CD4-positive, alpha-beta memory T cell (primary cell): ENCODE measurements at regions of chr1 and their contacts with region 1.

Region 1: GRCh38 chr1:179809506-179810366 is 66.6 kb downstream of the FAM163A start:
- DNase-seq: peak; percentile 70 to 74 (median 71)
- H3K4me3 ChIP-seq: no peak overlapping the region
- H3K4me3 Mint-ChIP-seq: peak overlapping the region in 1 of 8 donors; percentile 46
- H3K27ac ChIP-seq: no peak overlapping the region
- H3K27ac Mint-ChIP-seq: peak overlapping the region in 6 of 7 donors; percentile 0 to 48 (median 5)
- H3K4me1 ChIP-seq: peaks cover 14% of the 10 kb centered on the region
- H3K4me1 Mint-ChIP-seq: peaks cover 8 to 12% (median 11%) of the 10 kb centered on the region in 4 donors
- H3K27me3 ChIP-seq: no peaks in the 10 kb centered on the region
- H3K27me3 Mint-ChIP-seq: peaks cover 0 to 3% of the 10 kb centered on the region in 2 donors

Region 2: GRCh38 chr1:179081687-179082332 is 727.9 kb before region 1 on chr1 and contains the start of gene TOR3A:
- CTCF ChIA-PET with region 1: interaction called, 26 read pairs
- POLR2A ChIA-PET with region 1: no interaction called
- intact Hi-C with region 1: no loop called
- DNase-seq: peak; percentile 72 to 80 (median 75)
- H3K4me3 ChIP-seq: peak within 1 kb of the TSS; percentile 57 to 74
- H3K4me3 Mint-ChIP-seq: peak within 1 kb of the TSS; percentile 93 to 98 (median 96)
- H3K27ac ChIP-seq: peak within 1 kb of the TSS; percentile 81
- H3K27ac Mint-ChIP-seq: peak within 1 kb of the TSS; percentile 97 to 98 (median 97)
- H3K4me1 ChIP-seq: peaks cover 23% of the 10 kb centered on the region
- H3K4me1 Mint-ChIP-seq: peaks cover 15 to 37% (median 26%) of the 10 kb centered on the region in 4 donors
- H3K27me3 ChIP-seq: no peaks in the 10 kb centered on the region
- H3K27me3 Mint-ChIP-seq: no peaks in the 10 kb centered on the region
- total RNA-seq, gene TOR3A: 25.4 to 27.3 TPM

Region 3: DNA sequence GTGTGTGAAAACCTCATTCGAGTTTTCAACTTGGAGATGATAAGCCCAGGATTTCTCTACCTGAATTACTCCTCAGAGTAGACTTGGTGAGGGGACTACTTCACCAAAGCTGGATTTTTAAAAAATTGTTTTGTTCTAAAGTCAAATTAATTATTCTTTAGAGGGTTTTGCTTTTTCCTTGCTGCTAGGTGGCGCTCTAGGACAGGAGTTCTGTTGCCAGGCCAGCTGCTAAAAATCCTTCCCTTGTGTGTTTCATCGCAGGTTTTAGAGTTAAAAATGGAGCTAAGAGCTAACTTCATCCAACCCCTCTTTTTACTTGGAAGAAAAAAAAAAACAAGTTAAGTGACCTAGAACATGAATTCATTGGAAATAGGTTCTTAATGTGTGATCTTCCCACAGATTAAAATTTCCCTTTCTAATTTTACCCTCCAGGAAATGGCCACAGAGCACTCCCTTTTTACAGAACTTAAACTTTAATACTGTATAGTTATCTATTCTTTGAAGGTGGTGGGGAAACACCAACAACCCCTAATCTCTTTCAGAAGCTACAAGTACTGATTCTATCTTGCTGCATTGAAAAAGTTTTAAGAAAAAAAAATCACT is 103.3 kb before region 1 on chr1:
- CTCF ChIA-PET with region 1: interaction called, 446 read pairs
- POLR2A ChIA-PET with region 1: interaction called, 13 read pairs
- intact Hi-C with region 1: loop called (anchors 1 kb)
- DNase-seq: peak; percentile 56 to 66 (median 59)
- H3K4me3 ChIP-seq: no peak overlapping the region
- H3K4me3 Mint-ChIP-seq: no peak overlapping the region
- H3K27ac ChIP-seq: no peak overlapping the region
- H3K27ac Mint-ChIP-seq: peak overlapping the region; percentile 44 to 85 (median 76)
- H3K4me1 ChIP-seq: peaks cover 18% of the 10 kb centered on the region
- H3K4me1 Mint-ChIP-seq: peaks cover 5 to 22% (median 17%) of the 10 kb centered on the region in 4 donors
- H3K27me3 ChIP-seq: no peaks in the 10 kb centered on the region
- H3K27me3 Mint-ChIP-seq: peaks cover 0 to 5% of the 10 kb centered on the region in 2 donors

Region 4: DNA sequence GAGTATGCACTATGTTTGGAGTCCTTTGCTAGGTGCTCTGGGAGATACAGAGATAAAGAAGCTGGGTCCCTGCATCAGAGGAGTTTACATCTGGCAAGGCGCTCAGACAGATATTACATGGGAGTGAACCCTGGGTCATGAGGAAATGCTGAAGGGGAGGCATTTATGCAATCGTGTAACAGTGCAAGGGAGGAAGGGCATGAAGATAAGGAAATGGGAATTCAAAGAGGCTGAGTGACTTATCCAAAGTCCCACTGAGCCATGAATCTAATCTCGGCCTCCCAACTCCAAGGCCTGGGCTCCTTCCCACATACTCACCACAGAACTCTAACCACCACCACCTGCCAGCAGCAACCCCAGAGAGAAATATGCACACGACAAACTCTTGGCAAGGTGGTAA is 15.1 kb before region 1 on chr1:
- CTCF ChIA-PET with region 1: interaction called, 148 read pairs
- POLR2A ChIA-PET with region 1: no interaction called
- intact Hi-C with region 1: no loop called
- DNase-seq: no peak
- H3K4me3 ChIP-seq: no peak overlapping the region
- H3K4me3 Mint-ChIP-seq: no peak overlapping the region
- H3K27ac ChIP-seq: no peak overlapping the region
- H3K27ac Mint-ChIP-seq: peak overlapping the region in 1 of 7 donors; percentile 11
- H3K4me1 ChIP-seq: no peaks in the 10 kb centered on the region
- H3K4me1 Mint-ChIP-seq: no peaks in the 10 kb centered on the region
- H3K27me3 ChIP-seq: no peaks in the 10 kb centered on the region
- H3K27me3 Mint-ChIP-seq: peaks cover 0 to 1% of the 10 kb centered on the region in 2 donors

Region 5: GRCh38 chr1:179840107-179840506 is 30.4 kb after region 1 on chr1:
- CTCF ChIA-PET with region 1: interaction called, 33 read pairs
- POLR2A ChIA-PET with region 1: interaction called, 3 read pairs
- intact Hi-C with region 1: no loop called
- DNase-seq: no peak
- H3K4me3 ChIP-seq: no peak overlapping the region
- H3K4me3 Mint-ChIP-seq: no peak overlapping the region
- H3K27ac ChIP-seq: no peak overlapping the region
- H3K27ac Mint-ChIP-seq: no peak overlapping the region
- H3K4me1 ChIP-seq: no peaks in the 10 kb centered on the region
- H3K4me1 Mint-ChIP-seq: peaks cover 0 to 6% (median 5%) of the 10 kb centered on the region in 4 donors
- H3K27me3 ChIP-seq: no peaks in the 10 kb centered on the region
- H3K27me3 Mint-ChIP-seq: no peaks in the 10 kb centered on the region

Region 6: DNA sequence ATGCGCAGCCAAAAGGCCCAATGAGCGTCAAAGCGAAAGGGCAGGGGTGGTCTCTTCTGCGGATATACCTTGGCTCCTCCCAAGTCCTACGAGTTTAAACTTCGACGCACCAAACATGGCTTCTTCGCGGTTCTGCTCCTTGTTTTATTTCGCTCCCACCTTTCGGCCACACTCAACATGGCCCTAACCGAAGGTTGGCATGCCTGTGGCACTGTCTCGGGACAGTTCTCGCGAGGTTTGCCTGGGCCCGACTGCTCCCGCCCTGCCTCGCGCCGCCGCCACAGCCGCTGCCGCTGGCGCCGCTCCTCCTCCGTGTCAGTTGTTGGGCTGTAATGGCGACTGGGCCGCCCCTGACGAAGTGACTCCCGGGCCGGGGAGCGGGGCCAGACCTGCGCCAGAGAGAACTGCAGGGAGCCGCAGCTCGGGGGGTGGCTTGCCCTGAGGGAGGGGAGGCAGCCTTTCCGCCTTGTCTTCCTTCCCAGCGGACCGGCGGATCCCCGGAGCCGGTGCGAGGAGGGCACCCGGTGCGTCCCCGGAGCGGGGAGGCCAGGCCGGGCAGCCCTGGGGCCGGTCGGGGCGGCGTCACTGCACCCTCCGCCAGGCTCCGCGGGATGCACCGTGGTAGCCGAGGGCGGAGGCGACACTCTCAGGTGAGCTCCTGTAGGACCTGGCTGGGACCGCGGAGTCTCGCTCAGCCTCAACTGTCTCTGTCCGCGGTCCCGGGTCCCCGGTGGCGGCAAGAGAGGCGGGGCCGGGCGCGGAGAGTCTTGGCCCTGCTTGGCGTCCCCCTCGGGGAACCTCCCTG is 145.0 kb after region 1 on chr1 and contains the start of gene CEP350:
- CTCF ChIA-PET with region 1: interaction called, 15 read pairs
- POLR2A ChIA-PET with region 1: interaction called, 10 read pairs
- intact Hi-C with region 1: loop called (anchors 2 kb)
- DNase-seq: peak; percentile 97 to 99 (median 99)
- H3K4me3 ChIP-seq: peak within 1 kb of the TSS; percentile 68 to 76
- H3K4me3 Mint-ChIP-seq: peak within 1 kb of the TSS; percentile 86 to 99 (median 91)
- H3K27ac ChIP-seq: peak within 1 kb of the TSS; percentile 90
- H3K27ac Mint-ChIP-seq: peak within 1 kb of the TSS; percentile 86 to 98 (median 95)
- H3K4me1 ChIP-seq: peaks cover 50% of the 10 kb centered on the region
- H3K4me1 Mint-ChIP-seq: peaks cover 36 to 70% (median 48%) of the 10 kb centered on the region in 4 donors
- H3K27me3 ChIP-seq: no peaks in the 10 kb centered on the region
- H3K27me3 Mint-ChIP-seq: no peaks in the 10 kb centered on the region
- total RNA-seq, gene CEP350: 86.2 to 99.4 TPM

Region 7: GRCh38 chr1:180365039-180365438 is 555.3 kb after region 1 on chr1:
- CTCF ChIA-PET with region 1: no interaction called
- POLR2A ChIA-PET with region 1: no interaction called
- intact Hi-C with region 1: no loop called
- DNase-seq: no peak
- H3K4me3 ChIP-seq: no peak overlapping the region
- H3K4me3 Mint-ChIP-seq: no peak overlapping the region
- H3K27ac ChIP-seq: no peak overlapping the region
- H3K27ac Mint-ChIP-seq: no peak overlapping the region
- H3K4me1 ChIP-seq: no peaks in the 10 kb centered on the region
- H3K4me1 Mint-ChIP-seq: peaks cover 2 to 6% (median 5%) of the 10 kb centered on the region in 4 donors
- H3K27me3 ChIP-seq: no peaks in the 10 kb centered on the region
- H3K27me3 Mint-ChIP-seq: no peaks in the 10 kb centered on the region